Right cardiac atrium (tissue), 5 donors: ENCODE measurements at regions of chr22 and their contacts with region 1.

Region 1: DNA sequence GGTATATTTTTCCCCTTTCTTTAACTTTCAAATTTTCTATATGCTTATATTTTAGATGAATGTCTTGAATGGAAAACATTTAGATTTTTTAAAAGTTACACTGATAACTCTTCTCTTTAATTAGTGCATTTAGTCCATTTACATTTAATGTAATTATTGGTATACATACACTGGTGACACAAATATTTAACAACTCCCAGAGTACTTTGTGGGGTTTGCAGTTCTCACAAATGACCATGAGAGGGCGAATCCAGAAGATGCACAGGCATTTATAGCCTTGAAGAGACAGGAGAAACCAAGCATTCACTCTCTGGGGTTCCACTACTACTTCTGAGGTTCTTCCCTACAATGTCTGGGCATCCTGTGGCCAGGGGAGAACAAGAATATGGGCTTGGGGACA is 125.1 kb downstream of the TIMP3 start:
- DNase-seq: no peak
- ATAC-seq: peak in 1 of 2 donors; percentile 44
- H3K4me3 ChIP-seq: no peak overlapping the region
- H3K27ac ChIP-seq: no peak overlapping the region
- H3K4me1 ChIP-seq: no peaks in the 10 kb centered on the region
- H3K27me3 ChIP-seq: no peaks in the 10 kb centered on the region

Region 2: GRCh38 chr22:32979606-32980005 is 53.0 kb after region 1 on chr22:
- intact Hi-C with region 1: loop called in 1 of 4 experiments (anchors 10 kb)
- DNase-seq: no peak
- ATAC-seq: peak in 1 of 2 donors; percentile 56
- H3K4me3 ChIP-seq: no peak overlapping the region
- H3K27ac ChIP-seq: no peak overlapping the region
- H3K4me1 ChIP-seq: no peaks in the 10 kb centered on the region
- H3K27me3 ChIP-seq: no peaks in the 10 kb centered on the region

Region 3: DNA sequence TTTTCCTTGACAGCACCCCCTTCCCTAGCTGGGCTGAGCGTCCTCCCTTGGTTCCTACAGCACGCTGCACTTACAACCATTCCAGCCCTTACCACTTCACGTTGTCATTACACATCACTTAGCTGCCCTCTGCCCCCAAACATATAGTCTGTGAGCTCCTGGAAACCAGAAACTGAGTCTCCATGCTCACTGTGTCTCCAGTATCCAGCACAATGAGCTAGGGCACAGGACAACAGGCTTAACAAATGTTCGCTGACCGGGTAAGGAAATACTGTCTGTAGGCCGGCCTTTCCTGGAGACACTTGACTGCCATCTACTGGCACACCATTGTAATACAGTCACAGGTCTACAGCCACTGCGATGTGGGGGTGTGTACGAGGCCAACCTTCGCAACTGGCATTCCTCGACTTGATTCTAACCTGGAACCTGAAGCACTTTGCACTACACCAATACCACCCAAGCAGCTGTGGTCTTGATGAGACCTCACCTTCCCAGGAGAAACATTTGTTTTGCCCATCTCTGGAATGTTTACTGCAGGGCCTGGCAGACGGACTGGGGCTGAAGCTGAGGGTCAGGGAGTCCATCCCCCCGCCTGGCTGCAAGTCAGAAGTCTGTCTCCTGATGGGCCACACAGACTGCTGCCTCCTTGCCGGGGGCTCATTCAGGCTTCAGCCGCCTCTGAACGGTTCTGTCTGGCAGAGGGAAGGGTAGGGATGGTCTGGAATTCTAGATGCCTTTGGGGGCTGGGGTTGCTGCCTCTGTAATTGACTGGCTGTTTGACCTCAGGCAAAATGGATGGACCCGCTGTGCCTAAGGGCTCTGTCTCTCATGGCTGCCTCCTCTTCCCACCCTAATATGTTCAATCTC is 59.5 kb after region 1 on chr22:
- intact Hi-C with region 1: loop called in 2 of 4 experiments (anchors 5 kb)
- DNase-seq: peak; percentile 57 to 73 (median 67)
- ATAC-seq: peak; percentile 95 to 96
- H3K4me3 ChIP-seq: no peak overlapping the region
- H3K27ac ChIP-seq: no peak overlapping the region
- H3K4me1 ChIP-seq: no peaks in the 10 kb centered on the region
- H3K27me3 ChIP-seq: no peaks in the 10 kb centered on the region